ENCODE measurements at regions of chr12 and their contacts with region 1.

Region 1: DNA sequence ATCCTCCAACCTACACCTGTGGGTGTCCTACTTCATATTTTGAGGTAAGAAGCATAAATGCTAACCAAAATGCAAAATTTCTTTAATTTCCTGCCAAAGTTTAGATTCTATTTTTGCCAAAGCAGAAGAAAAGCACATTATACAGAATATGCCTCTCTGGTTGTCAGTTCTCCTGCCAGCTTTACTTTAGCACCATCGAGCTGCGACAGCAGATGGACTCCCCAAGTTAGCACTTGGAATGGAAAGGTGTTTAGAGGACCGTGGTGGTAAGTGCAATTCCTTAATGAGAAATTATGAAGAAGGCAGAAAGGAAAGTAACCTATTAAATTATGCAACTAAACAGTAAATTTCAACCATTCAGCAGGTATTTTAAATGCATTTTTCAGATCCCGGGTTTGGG is 326.6 kb downstream of the RERGL start:
- DNase-seq: no peak
- H3K4me3 ChIP-seq: no peak overlapping the region
- H3K27ac ChIP-seq: no peak overlapping the region
- H3K4me1 ChIP-seq: no peaks in the 10 kb centered on the region
- H3K27me3 ChIP-seq: no peaks in the 10 kb centered on the region
- CTCF ChIP-seq: no peak

Region 2: DNA sequence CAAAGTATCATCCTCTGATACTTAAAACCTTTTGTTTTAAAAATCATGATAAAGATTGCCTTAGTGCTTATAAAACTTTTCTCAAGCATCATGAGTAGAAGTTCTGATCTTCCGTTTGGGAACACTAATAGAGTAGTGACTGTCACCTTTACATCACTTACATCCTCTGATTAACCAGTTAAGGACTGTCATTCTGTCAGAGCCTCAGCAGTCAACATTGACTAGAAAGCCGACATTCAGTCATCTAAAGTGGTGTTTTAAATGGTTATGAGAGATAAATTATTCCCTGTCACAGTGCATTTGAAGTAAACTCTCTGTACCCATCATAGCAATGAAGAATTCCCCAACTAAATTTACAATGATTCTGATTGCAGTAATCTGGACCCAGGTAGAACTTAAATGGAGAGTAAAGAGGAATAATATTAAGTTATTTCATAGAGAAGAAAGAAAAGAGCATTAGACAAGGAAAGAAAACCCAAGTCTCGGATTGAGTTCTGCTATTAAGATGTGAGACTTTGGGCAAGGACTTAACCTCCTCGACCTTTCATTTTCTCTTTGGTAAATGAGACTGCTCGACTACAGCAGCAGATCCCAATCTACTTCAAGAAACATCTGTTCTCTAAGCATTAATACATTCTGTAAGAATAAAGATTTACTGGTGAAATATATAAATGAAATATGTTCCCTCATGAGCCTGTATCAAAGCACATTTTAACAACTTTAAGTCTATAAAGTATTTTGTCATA is 593.5 kb before region 1 on chr12:
- CTCF ChIA-PET with region 1: no interaction called
- POLR2A ChIA-PET with region 1: no interaction called
- intact Hi-C with region 1: no loop called
- DNase-seq: no peak
- H3K4me3 ChIP-seq: no peak overlapping the region
- H3K27ac ChIP-seq: no peak overlapping the region
- H3K4me1 ChIP-seq: no peaks in the 10 kb centered on the region
- H3K27me3 ChIP-seq: no peaks in the 10 kb centered on the region
- CTCF ChIP-seq: no peak

Region 3: DNA sequence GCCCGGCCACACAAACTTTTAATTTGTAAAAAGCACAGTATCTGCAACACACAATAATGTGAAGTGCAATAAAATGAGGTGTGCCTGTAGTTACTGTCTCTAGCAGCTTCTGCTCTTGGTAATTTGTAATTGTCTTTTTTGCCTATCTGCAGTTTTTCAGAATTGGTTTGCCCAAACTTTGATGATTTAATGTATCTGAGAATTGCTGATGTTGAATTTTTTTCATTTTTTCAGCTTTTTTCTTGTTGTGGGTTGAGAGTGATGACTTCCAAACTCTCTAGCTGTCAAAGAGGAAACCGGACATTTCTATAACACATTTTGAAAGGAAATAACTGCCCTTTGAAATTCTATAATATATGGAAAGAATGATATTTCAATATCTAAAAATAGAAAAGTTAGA is 89.7 kb after region 1 on chr12:
- CTCF ChIA-PET with region 1: no interaction called
- POLR2A ChIA-PET with region 1: no interaction called
- intact Hi-C with region 1: loop called (anchors 2 kb)
- DNase-seq: no peak
- H3K4me3 ChIP-seq: no peak overlapping the region
- H3K27ac ChIP-seq: no peak overlapping the region
- H3K4me1 ChIP-seq: no peaks in the 10 kb centered on the region
- H3K27me3 ChIP-seq: no peaks in the 10 kb centered on the region
- CTCF ChIP-seq: no peak